ENCODE measurements at regions of chr6 and their contacts with region 1.

Region 1: GRCh38 chr6:91081452-91082067 is 494.7 kb upstream of the MAP3K7 start:
- DNase-seq: peak; percentile 52
- ATAC-seq: peak; percentile 59; the same call in 1 of the 2 replicates
- H3K4me3 ChIP-seq: no peak overlapping the region
- H3K27ac ChIP-seq: no peak overlapping the region
- H3K4me1 ChIP-seq: peaks cover 2% of the 10 kb centered on the region; the same call in 1 of the 2 replicates
- H3K27me3 ChIP-seq: no peaks in the 10 kb centered on the region
- CTCF ChIP-seq: peak; percentile 68
- POLR2A ChIP-seq: no peak
- RAD21 ChIP-seq: peak; percentile 71

Region 2: DNA sequence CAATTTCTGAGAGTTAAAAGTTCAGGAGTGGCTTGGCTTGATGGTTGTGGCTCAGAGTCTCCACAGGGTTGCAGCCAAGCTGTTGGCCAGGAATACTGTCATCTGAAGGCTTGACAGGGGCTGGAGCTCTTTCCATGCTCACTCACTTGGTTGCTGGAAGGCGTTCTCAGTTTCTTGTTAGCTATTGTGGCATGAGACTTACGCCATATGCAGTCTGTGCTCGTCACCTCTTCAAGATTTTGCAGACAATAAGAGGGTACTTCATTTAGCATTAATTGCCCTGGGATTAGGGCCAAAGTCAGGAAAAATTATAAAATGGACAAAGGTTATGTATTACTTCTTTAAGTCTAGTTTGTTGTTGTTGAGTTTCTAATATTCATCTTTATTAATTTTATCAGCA is 114.1 kb before region 1 on chr6:
- CTCF ChIA-PET with region 1: no interaction called
- POLR2A ChIA-PET with region 1: no interaction called
- dilution Hi-C with region 1: no loop called
- in situ Hi-C with region 1: no loop called
- intact Hi-C with region 1: no loop called
- DNase-seq: no peak
- ATAC-seq: no peak
- H3K4me3 ChIP-seq: no peak overlapping the region
- H3K27ac ChIP-seq: no peak overlapping the region
- H3K4me1 ChIP-seq: no peaks in the 10 kb centered on the region
- H3K27me3 ChIP-seq: no peaks in the 10 kb centered on the region
- CTCF ChIP-seq: no peak
- POLR2A ChIP-seq: no peak
- RAD21 ChIP-seq: no peak

Region 3: GRCh38 chr6:91276315-91276714 is 194.8 kb after region 1 on chr6:
- CTCF ChIA-PET with region 1: no interaction called
- POLR2A ChIA-PET with region 1: no interaction called
- dilution Hi-C with region 1: no loop called
- in situ Hi-C with region 1: no loop called
- intact Hi-C with region 1: loop called (anchors 5 kb)
- DNase-seq: peak; percentile 4
- ATAC-seq: peak; percentile 68
- H3K4me3 ChIP-seq: no peak overlapping the region
- H3K27ac ChIP-seq: no peak overlapping the region
- H3K4me1 ChIP-seq: no peaks in the 10 kb centered on the region
- H3K27me3 ChIP-seq: no peaks in the 10 kb centered on the region
- CTCF ChIP-seq: peak; percentile 32
- POLR2A ChIP-seq: no peak
- RAD21 ChIP-seq: peak; percentile 34; the same call in 1 of the 2 replicates

Region 4: DNA sequence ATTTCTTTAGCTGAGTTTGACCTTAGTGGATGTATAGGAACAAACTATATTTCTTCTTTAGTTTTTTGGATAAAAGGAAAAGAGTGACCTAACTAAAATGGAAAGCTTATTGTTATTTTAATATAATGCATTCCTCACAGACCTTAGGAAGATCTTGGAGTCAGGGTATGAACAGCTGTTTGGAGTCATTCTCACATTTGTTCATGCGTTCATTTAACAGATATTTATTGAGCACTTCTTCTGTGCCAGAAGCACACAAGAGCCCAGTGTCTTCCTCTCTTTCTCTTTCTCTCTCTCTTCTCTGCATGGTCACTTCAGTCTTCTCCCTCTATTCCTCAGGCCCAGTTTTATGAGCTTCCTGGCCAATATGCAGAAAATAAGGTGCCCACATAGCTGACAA is 249.3 kb after region 1 on chr6:
- CTCF ChIA-PET with region 1: interaction called, 7 read pairs
- POLR2A ChIA-PET with region 1: no interaction called
- dilution Hi-C with region 1: no loop called
- in situ Hi-C with region 1: no loop called
- intact Hi-C with region 1: loop called (anchors 5 kb)
- DNase-seq: no peak
- ATAC-seq: no peak
- H3K4me3 ChIP-seq: no peak overlapping the region
- H3K27ac ChIP-seq: no peak overlapping the region
- H3K4me1 ChIP-seq: no peaks in the 10 kb centered on the region
- H3K27me3 ChIP-seq: no peaks in the 10 kb centered on the region
- CTCF ChIP-seq: no peak
- POLR2A ChIP-seq: no peak
- RAD21 ChIP-seq: no peak

Region 5: GRCh38 chr6:92122746-92123145 is 1041.2 kb after region 1 on chr6:
- CTCF ChIA-PET with region 1: interaction called, 6 read pairs
- POLR2A ChIA-PET with region 1: no interaction called
- dilution Hi-C with region 1: no loop called
- in situ Hi-C with region 1: no loop called
- intact Hi-C with region 1: loop called (anchors 2 kb)
- DNase-seq: peak; percentile 1
- ATAC-seq: no peak
- H3K4me3 ChIP-seq: no peak overlapping the region
- H3K27ac ChIP-seq: no peak overlapping the region
- H3K4me1 ChIP-seq: no peaks in the 10 kb centered on the region
- H3K27me3 ChIP-seq: no peaks in the 10 kb centered on the region
- CTCF ChIP-seq: peak; percentile 35
- POLR2A ChIP-seq: no peak
- RAD21 ChIP-seq: peak; percentile 33; the same call in 1 of the 2 replicates

Region 6: DNA sequence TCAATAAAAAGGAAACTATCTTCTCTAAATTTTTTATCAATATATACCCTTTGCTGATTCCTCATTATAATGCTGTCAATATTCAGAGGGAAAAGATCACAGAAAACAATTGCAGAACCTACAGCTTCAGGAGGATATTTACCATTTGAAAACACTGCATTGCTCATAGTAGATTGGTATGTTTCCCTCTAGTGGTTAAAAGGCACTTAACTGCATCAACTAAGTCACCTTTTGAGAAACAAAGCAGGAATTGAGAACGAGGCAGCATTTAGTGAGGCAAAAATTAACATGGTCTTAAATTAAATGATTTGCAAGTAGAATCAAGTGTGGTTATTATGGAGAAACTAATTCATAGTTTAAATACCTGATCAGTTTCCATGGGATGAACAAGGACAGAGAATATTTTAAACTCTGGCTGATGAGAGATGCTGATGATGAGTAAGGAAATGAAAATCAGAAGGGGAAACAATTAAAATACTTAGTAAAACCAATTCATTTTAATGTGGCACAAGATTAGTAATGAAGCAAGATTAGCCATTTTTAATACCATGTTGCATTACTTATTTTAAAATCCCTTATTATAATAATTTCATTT is 1695.7 kb after region 1 on chr6:
- CTCF ChIA-PET with region 1: no interaction called
- POLR2A ChIA-PET with region 1: no interaction called
- dilution Hi-C with region 1: no loop called
- in situ Hi-C with region 1: no loop called
- intact Hi-C with region 1: loop called (anchors 5 kb)
- DNase-seq: peak; percentile 42
- ATAC-seq: peak; percentile 62
- H3K4me3 ChIP-seq: no peak overlapping the region
- H3K27ac ChIP-seq: no peak overlapping the region
- H3K4me1 ChIP-seq: no peaks in the 10 kb centered on the region
- H3K27me3 ChIP-seq: no peaks in the 10 kb centered on the region
- CTCF ChIP-seq: peak; percentile 56
- POLR2A ChIP-seq: no peak
- RAD21 ChIP-seq: peak; percentile 54